ENCODE measurements at regions of chr3 and their contacts with region 1.

Region 1: DNA sequence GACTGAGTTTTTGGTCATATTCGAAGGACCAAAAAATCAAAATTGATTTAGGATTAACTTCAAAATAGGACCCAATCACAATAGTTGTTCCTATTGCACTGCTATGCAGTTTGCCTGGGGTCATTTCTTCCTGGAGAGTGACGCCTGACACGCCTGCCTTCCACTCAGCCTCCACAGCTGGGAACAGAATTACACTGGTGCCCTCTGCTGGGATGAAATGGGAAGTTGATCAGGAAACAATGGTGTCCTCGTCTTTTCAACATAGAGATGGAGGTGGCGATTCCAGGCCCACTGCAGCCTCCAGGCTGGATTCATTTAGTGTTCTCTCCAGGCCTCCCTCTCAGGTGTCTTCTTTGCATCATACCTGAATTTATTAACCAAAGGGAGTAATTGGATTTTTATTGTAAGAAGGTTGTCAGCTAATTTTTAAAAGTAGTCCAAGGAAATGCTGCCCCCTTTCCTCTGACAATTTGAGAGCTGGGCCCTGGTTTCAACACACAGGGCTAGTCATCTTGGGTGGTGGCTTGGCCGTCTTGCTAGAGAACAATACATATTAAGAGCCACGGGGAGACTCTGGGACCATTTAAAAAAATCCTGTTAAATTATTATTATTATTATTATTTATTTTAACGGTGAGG is 69.7 kb downstream of the GAP43 start:
- DNase-seq: peak; percentile 37 to 79 (median 49)
- ATAC-seq: peak; percentile 86
- H3K4me3 ChIP-seq: no peak overlapping the region
- H3K4me3 Mint-ChIP-seq: no peak overlapping the region
- H3K27ac ChIP-seq: no peak overlapping the region
- H3K27ac Mint-ChIP-seq: no peak overlapping the region
- H3K4me1 ChIP-seq: no peaks in the 10 kb centered on the region
- H3K4me1 Mint-ChIP-seq: no peaks in the 10 kb centered on the region
- H3K27me3 ChIP-seq: no peaks in the 10 kb centered on the region
- H3K27me3 Mint-ChIP-seq: peaks cover 7% of the 10 kb centered on the region
- CTCF ChIP-seq: peak; percentile 85

Region 2: GRCh38 chr3:114383875-114384557 is 1309.0 kb before region 1 on chr3:
- CTCF ChIA-PET with region 1: no interaction called
- POLR2A ChIA-PET with region 1: no interaction called
- intact Hi-C with region 1: loop called (anchors 5 to 10 kb)
- DNase-seq: peak; percentile 26 to 78 (median 50)
- ATAC-seq: peak; percentile 97
- H3K4me3 ChIP-seq: peak overlapping the region; percentile 27
- H3K4me3 Mint-ChIP-seq: peak overlapping the region; percentile 58
- H3K27ac ChIP-seq: no peak overlapping the region
- H3K27ac Mint-ChIP-seq: no peak overlapping the region
- H3K4me1 ChIP-seq: peaks cover 11% of the 10 kb centered on the region
- H3K4me1 Mint-ChIP-seq: peaks cover 21% of the 10 kb centered on the region
- H3K27me3 ChIP-seq: no peaks in the 10 kb centered on the region
- H3K27me3 Mint-ChIP-seq: no peaks in the 10 kb centered on the region
- CTCF ChIP-seq: peak; percentile 89

Region 3: GRCh38 chr3:114827495-114827894 is 865.5 kb before region 1 on chr3:
- CTCF ChIA-PET with region 1: no interaction called
- POLR2A ChIA-PET with region 1: no interaction called
- intact Hi-C with region 1: loop called in 1 of 2 experiments (anchors 10 kb)
- DNase-seq: peak in 3 of 14 experiments; percentile 36 to 47 (median 38)
- ATAC-seq: no peak
- H3K4me3 ChIP-seq: no peak overlapping the region
- H3K4me3 Mint-ChIP-seq: no peak overlapping the region
- H3K27ac ChIP-seq: no peak overlapping the region
- H3K27ac Mint-ChIP-seq: no peak overlapping the region
- H3K4me1 ChIP-seq: no peaks in the 10 kb centered on the region
- H3K4me1 Mint-ChIP-seq: peaks cover 6% of the 10 kb centered on the region
- H3K27me3 ChIP-seq: no peaks in the 10 kb centered on the region
- H3K27me3 Mint-ChIP-seq: no peaks in the 10 kb centered on the region
- CTCF ChIP-seq: peak; percentile 17

Region 4: GRCh38 chr3:115092220-115092791 is 600.7 kb before region 1 on chr3:
- CTCF ChIA-PET with region 1: no interaction called
- POLR2A ChIA-PET with region 1: no interaction called
- intact Hi-C with region 1: loop called (anchors 1 to 2 kb)
- DNase-seq: peak; percentile 14 to 79 (median 56)
- ATAC-seq: peak; percentile 67
- H3K4me3 ChIP-seq: no peak overlapping the region
- H3K4me3 Mint-ChIP-seq: no peak overlapping the region
- H3K27ac ChIP-seq: no peak overlapping the region
- H3K27ac Mint-ChIP-seq: no peak overlapping the region
- H3K4me1 ChIP-seq: no peaks in the 10 kb centered on the region
- H3K4me1 Mint-ChIP-seq: peaks cover 68% of the 10 kb centered on the region
- H3K27me3 ChIP-seq: no peaks in the 10 kb centered on the region
- H3K27me3 Mint-ChIP-seq: no peaks in the 10 kb centered on the region
- CTCF ChIP-seq: peak; percentile 81

Region 5: GRCh38 chr3:115217678-115218451 is 475.1 kb before region 1 on chr3:
- CTCF ChIA-PET with region 1: no interaction called
- POLR2A ChIA-PET with region 1: no interaction called
- intact Hi-C with region 1: loop called in 1 of 2 experiments (anchors 2 kb)
- DNase-seq: peak in 3 of 14 experiments; percentile 22 to 38 (median 38)
- ATAC-seq: no peak
- H3K4me3 ChIP-seq: no peak overlapping the region
- H3K4me3 Mint-ChIP-seq: no peak overlapping the region
- H3K27ac ChIP-seq: no peak overlapping the region
- H3K27ac Mint-ChIP-seq: no peak overlapping the region
- H3K4me1 ChIP-seq: no peaks in the 10 kb centered on the region
- H3K4me1 Mint-ChIP-seq: no peaks in the 10 kb centered on the region
- H3K27me3 ChIP-seq: no peaks in the 10 kb centered on the region
- H3K27me3 Mint-ChIP-seq: no peaks in the 10 kb centered on the region
- CTCF ChIP-seq: peak; percentile 29

Region 6: GRCh38 chr3:115819785-115820384 is 126.9 kb after region 1 on chr3:
- CTCF ChIA-PET with region 1: interaction called, 6 read pairs
- POLR2A ChIA-PET with region 1: no interaction called
- intact Hi-C with region 1: loop called (anchors 5 kb)
- DNase-seq: peak; percentile 18 to 89 (median 40)
- ATAC-seq: peak; percentile 95
- H3K4me3 ChIP-seq: no peak overlapping the region
- H3K4me3 Mint-ChIP-seq: no peak overlapping the region
- H3K27ac ChIP-seq: no peak overlapping the region
- H3K27ac Mint-ChIP-seq: no peak overlapping the region
- H3K4me1 ChIP-seq: no peaks in the 10 kb centered on the region
- H3K4me1 Mint-ChIP-seq: no peaks in the 10 kb centered on the region
- H3K27me3 ChIP-seq: no peaks in the 10 kb centered on the region
- H3K27me3 Mint-ChIP-seq: no peaks in the 10 kb centered on the region
- CTCF ChIP-seq: peak; percentile 100

Region 7: DNA sequence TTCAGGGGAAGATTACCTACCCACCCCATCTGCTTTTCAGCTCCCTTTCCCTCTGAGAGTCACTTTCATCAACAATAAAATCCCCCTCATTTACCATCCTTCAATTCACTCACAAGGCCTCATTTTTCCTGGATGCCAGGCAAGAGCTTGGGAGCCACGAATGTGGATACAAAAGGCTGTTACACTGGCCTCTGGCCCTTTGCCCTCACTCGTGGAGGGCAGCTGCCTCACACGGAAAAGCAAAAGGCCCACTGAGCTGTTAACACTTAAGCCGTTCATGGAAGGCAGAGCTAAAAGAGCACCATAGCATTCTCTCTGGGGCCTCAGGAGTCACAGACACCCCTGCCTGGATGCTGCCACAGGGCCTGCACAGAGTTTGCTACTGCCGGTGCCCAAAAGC is 914.2 kb after region 1 on chr3:
- CTCF ChIA-PET with region 1: no interaction called
- POLR2A ChIA-PET with region 1: no interaction called
- intact Hi-C with region 1: no loop called
- DNase-seq: no peak
- ATAC-seq: no peak
- H3K4me3 ChIP-seq: no peak overlapping the region
- H3K4me3 Mint-ChIP-seq: no peak overlapping the region
- H3K27ac ChIP-seq: no peak overlapping the region
- H3K27ac Mint-ChIP-seq: no peak overlapping the region
- H3K4me1 ChIP-seq: no peaks in the 10 kb centered on the region
- H3K4me1 Mint-ChIP-seq: no peaks in the 10 kb centered on the region
- H3K27me3 ChIP-seq: no peaks in the 10 kb centered on the region
- H3K27me3 Mint-ChIP-seq: no peaks in the 10 kb centered on the region
- CTCF ChIP-seq: no peak

Measured in CD4-positive, alpha-beta T cell (primary cell).